ENCODE measurements at regions of chr3 and their contacts with region 1.

Region 1: DNA sequence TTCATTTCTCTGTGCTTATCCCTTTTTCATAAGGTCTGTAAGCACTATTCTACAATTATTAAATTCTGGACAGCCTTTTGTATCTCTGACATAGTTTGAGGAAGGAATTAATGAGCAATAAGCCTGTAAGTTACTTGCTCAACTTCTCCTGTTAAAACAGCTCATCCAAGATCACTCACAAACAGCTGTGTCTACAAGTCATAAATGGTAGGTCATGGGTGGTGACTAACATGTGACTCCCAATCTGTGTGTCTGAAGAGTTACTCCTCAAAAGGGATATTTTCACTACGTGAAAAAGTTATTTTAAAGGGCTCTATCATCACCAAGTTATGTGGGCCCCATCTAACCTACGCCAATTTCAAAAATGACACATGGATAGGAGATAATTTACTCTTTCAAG is 145.2 kb upstream of the CBLB start:
- DNase-seq: no peak
- H3K4me3 Mint-ChIP-seq: no peak overlapping the region
- H3K27ac Mint-ChIP-seq: peak overlapping the region; percentile 5
- H3K4me1 Mint-ChIP-seq: peaks cover 65% of the 10 kb centered on the region
- H3K27me3 Mint-ChIP-seq: no peaks in the 10 kb centered on the region

Region 2: DNA sequence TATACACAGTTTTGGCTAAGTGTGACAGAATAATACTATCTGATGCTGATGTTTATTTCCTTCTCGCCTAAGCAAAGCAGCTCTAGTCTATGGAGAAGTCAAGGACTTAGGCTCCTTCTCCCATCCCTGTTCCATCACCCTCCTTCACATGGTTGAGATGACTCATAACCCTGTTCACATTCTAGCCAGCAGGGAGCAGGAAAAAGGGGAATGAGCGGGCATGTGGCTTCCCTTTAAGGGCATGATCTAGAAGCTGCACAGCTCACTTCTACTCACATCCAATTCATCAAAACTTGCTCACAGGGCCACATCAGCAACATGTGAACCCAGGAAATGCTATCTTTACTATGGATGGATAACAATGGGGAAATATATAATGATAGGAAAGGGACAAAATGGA is 186.0 kb before region 1 on chr3:
- intact Hi-C with region 1: loop called (anchors 1 kb)
- DNase-seq: no peak
- H3K4me3 Mint-ChIP-seq: peak overlapping the region; percentile 57
- H3K27ac Mint-ChIP-seq: peak overlapping the region; percentile 96
- H3K4me1 Mint-ChIP-seq: peaks cover 88% of the 10 kb centered on the region
- H3K27me3 Mint-ChIP-seq: no peaks in the 10 kb centered on the region

Region 3: DNA sequence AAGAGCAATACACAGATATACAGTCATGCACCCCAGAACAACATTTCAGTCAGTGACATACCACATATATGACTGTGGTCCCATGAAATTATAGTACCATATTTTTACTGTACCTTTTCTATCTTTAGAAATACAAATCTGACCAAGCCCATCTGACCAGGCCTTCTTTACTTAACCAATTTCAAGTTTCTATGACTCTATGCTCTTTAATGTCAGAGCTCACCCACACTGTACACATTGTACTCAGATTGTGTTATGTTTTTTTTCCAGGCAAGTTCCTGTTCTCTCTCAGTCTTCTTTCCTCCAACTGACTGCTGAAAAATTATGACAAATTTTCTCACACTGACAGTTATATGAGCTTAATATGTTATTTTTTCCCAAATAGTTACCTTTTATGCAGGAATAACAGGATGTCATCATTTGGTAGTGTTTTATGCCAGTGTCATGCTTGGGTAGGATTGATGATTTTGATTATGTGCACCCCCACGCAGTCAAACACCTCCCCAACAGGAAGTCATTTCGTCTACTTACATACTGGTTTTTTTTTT is 137.1 kb before region 1 on chr3:
- intact Hi-C with region 1: loop called (anchors 1 kb)
- DNase-seq: no peak
- H3K4me3 Mint-ChIP-seq: peak overlapping the region; percentile 64
- H3K27ac Mint-ChIP-seq: peak overlapping the region; percentile 80
- H3K4me1 Mint-ChIP-seq: peaks cover 35% of the 10 kb centered on the region
- H3K27me3 Mint-ChIP-seq: no peaks in the 10 kb centered on the region

Region 4: DNA sequence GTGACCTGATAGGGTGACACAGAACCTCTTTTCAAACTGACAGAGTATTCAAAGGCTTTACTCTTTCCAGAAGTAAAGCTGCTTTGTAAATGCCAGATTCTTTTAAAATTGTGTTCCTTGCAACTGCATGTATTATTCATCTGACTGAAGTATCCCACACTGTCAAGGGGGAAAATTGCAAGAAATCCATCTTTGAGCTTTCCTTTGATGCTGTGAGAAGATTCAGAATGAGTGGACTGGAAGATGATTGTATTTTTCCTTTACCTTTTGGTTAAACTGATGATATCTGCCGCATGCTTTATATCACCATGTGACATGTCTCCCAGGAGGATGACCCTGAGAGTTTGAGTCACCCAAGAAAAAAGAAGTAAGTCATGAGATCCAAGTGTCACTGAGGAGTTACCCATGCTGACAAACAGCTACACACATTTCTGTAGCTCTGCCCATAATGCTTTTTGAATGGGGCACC is 105.7 kb after region 1 on chr3:
- intact Hi-C with region 1: loop called (anchors 1 kb)
- DNase-seq: no peak
- H3K4me3 Mint-ChIP-seq: peak overlapping the region; percentile 20
- H3K27ac Mint-ChIP-seq: peak overlapping the region; percentile 90
- H3K4me1 Mint-ChIP-seq: peaks cover 37% of the 10 kb centered on the region
- H3K27me3 Mint-ChIP-seq: no peaks in the 10 kb centered on the region

Region 5: DNA sequence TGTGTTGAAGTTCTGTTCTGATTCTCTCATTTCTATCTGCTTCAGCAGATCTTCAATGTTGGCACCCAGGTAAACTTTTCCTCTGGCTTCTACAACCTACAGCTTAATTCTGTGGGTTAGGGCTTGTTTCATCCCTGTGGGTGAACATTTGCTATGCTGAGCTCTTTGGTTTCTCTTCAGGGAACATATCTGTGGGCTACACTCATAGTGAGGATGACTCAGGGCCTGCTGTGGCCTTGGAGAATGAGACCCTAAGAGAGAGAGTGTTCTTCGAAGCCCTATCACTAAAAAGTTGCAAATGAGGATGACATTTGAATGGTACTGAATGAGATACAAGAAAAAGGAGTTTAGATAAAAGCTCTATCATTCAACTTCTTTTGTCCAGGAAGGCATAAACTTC is 201.1 kb after region 1 on chr3:
- intact Hi-C with region 1: loop called (anchors 1 kb)
- DNase-seq: peak; percentile 5
- H3K4me3 Mint-ChIP-seq: peak overlapping the region; percentile 43
- H3K27ac Mint-ChIP-seq: peak overlapping the region; percentile 82
- H3K4me1 Mint-ChIP-seq: peaks cover 56% of the 10 kb centered on the region
- H3K27me3 Mint-ChIP-seq: no peaks in the 10 kb centered on the region

Region 6: GRCh38 chr3:106609666-106610301 is 595.8 kb after region 1 on chr3:
- intact Hi-C with region 1: loop called (anchors 5 kb)
- DNase-seq: peak; percentile 50
- H3K4me3 Mint-ChIP-seq: no peak overlapping the region
- H3K27ac Mint-ChIP-seq: peak overlapping the region; percentile 66
- H3K4me1 Mint-ChIP-seq: peaks cover 30% of the 10 kb centered on the region
- H3K27me3 Mint-ChIP-seq: no peaks in the 10 kb centered on the region

Measured in activated T-helper 1 cell treated with anti-CD3 and anti-CD28 coated beads, Interleukin-12 subunit alpha, Interleukin-12 subunit beta, Interleukin-2, Interleukin-4 antibody, amounts not matched to agents 30 ng/mL and 10 ng/mL and 1 ng/mL, durations not matched to agents 14 hours and 24 hours and 36 hours (primary cell).